CD4-positive, alpha-beta memory T cell (primary cell): ENCODE measurements at regions of chr11 and their contacts with region 1.

Region 1: DNA sequence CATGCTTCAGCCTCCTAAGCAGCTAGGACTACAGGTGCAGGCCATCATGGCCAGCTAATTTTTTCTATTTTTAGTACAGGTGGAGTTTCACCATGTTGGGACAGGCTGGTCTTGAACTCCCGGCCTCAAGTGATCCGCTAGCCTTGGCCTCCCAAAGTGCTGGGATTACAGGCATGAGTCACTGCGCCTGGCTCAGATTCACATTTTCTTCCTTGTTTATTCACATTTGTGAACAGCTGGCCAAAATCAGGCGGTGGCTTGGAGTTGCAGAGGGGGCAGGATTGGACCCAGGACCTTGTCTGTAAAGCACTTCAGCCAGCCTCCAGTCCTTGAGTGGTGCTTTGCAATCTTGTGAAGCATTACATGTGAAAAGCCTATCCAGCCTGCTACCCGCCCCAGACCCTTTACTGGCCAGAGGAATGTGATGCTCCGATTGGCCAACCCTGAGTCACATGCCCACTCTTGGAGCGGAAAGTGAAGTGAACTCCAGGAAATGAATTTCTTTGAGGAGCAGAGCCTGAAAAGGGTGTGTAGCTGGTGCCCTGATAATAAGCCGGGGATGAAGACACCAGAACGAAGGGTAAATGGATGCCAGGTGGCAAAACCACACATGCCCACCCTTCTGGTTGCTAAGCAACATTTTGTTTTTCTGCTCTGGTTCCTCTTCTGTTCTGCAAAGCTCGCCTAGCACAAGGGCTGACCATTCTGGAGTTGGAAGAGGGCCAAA is 62.6 kb upstream of the PTPRJ start:
- DNase-seq: peak in 1 of 5 donors; percentile 7
- H3K4me3 ChIP-seq: no peak overlapping the region
- H3K4me3 Mint-ChIP-seq: no peak overlapping the region
- H3K27ac ChIP-seq: no peak overlapping the region
- H3K27ac Mint-ChIP-seq: peak overlapping the region; percentile 71 to 99 (median 85)
- H3K4me1 ChIP-seq: peaks cover 69% of the 10 kb centered on the region
- H3K4me1 Mint-ChIP-seq: peaks cover 54 to 90% (median 68%) of the 10 kb centered on the region in 4 donors
- H3K27me3 ChIP-seq: no peaks in the 10 kb centered on the region
- H3K27me3 Mint-ChIP-seq: no peaks in the 10 kb centered on the region

Region 2: GRCh38 chr11:47863189-47863892 is 54.5 kb before region 1 on chr11:
- CTCF ChIA-PET with region 1: no interaction called
- POLR2A ChIA-PET with region 1: interaction called, 5 read pairs
- intact Hi-C with region 1: loop called (anchors 5 kb)
- DNase-seq: peak in 4 of 5 donors; percentile 59 to 77 (median 74)
- H3K4me3 ChIP-seq: no peak overlapping the region
- H3K4me3 Mint-ChIP-seq: peak overlapping the region in 7 of 8 donors; percentile 17 to 73 (median 49)
- H3K27ac ChIP-seq: peak overlapping the region; percentile 30
- H3K27ac Mint-ChIP-seq: peak overlapping the region; percentile 14 to 80 (median 70)
- H3K4me1 ChIP-seq: peaks cover 43% of the 10 kb centered on the region
- H3K4me1 Mint-ChIP-seq: peaks cover 23 to 49% (median 39%) of the 10 kb centered on the region in 4 donors
- H3K27me3 ChIP-seq: no peaks in the 10 kb centered on the region
- H3K27me3 Mint-ChIP-seq: no peaks in the 10 kb centered on the region

Region 3: GRCh38 chr11:47879259-47880158 is 38.3 kb before region 1 on chr11:
- CTCF ChIA-PET with region 1: no interaction called
- POLR2A ChIA-PET with region 1: no interaction called
- intact Hi-C with region 1: no loop called
- DNase-seq: no peak
- H3K4me3 ChIP-seq: no peak overlapping the region
- H3K4me3 Mint-ChIP-seq: no peak overlapping the region
- H3K27ac ChIP-seq: no peak overlapping the region
- H3K27ac Mint-ChIP-seq: peak overlapping the region in 2 of 7 donors; percentile 36 to 73
- H3K4me1 ChIP-seq: peaks cover 5% of the 10 kb centered on the region
- H3K4me1 Mint-ChIP-seq: peaks cover 8 to 16% (median 12%) of the 10 kb centered on the region in 4 donors
- H3K27me3 ChIP-seq: no peaks in the 10 kb centered on the region
- H3K27me3 Mint-ChIP-seq: no peaks in the 10 kb centered on the region

Region 4: DNA sequence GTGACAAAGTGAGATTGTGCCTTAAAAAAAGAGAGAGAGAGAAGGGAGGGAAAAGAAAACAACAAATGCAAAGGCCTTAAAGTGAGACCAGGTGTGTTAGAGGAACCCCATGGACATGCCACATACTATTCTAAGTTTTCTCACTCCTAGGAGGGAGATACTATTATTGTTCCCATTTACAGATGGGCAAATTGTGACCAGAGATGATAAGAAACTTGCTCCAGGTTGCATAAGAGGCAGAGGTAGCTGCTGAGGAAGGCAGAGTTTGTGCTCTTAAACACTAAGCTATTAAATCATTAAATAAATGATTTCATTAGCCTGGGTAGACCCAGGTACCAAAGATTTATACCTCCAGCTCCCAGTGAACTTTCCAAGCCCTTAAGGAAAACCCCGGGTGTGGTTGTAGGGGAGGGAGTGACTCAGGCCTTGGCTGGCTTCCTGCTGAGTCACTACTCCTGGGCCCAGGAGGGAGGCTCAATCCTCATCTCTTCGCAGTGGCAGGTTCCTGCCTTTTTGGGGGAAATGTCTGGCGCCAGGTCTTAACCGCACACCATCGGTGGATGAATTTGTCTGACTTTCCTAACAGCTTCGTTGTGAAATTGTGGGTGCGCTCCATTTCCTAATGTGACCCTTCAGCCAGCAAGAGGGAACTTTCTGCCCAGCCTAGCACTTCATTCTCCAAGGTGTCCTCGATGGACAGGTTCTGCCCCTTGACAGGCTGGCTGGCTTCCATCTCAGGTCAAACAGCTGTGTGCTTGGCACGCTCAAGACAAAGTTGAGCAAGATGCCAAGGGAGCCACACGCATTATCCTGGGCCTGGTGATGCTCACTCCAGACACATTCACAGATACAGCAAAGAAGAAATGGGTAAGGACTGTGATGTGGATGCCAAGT is 29.1 kb after region 1 on chr11:
- CTCF ChIA-PET with region 1: no interaction called
- POLR2A ChIA-PET with region 1: no interaction called
- intact Hi-C with region 1: no loop called
- DNase-seq: no peak
- H3K4me3 ChIP-seq: no peak overlapping the region
- H3K4me3 Mint-ChIP-seq: no peak overlapping the region
- H3K27ac ChIP-seq: no peak overlapping the region
- H3K27ac Mint-ChIP-seq: peak overlapping the region in 2 of 7 donors; percentile 60 to 78
- H3K4me1 ChIP-seq: peaks cover 18% of the 10 kb centered on the region
- H3K4me1 Mint-ChIP-seq: peaks cover 11 to 38% (median 16%) of the 10 kb centered on the region in 4 donors
- H3K27me3 ChIP-seq: no peaks in the 10 kb centered on the region
- H3K27me3 Mint-ChIP-seq: no peaks in the 10 kb centered on the region